Activated T-helper 1 cell treated with anti-CD3 and anti-CD28 coated beads, Interleukin-12 subunit alpha, Interleukin-12 subunit beta, Interleukin-2, Interleukin-4 antibody, amounts not matched to agents 30 ng/mL and 10 ng/mL and 1 ng/mL, durations not matched to agents 14 hours and 24 hours and 36 hours (primary cell): ENCODE measurements at regions of chr22 and their contacts with region 1.

Region 1: DNA sequence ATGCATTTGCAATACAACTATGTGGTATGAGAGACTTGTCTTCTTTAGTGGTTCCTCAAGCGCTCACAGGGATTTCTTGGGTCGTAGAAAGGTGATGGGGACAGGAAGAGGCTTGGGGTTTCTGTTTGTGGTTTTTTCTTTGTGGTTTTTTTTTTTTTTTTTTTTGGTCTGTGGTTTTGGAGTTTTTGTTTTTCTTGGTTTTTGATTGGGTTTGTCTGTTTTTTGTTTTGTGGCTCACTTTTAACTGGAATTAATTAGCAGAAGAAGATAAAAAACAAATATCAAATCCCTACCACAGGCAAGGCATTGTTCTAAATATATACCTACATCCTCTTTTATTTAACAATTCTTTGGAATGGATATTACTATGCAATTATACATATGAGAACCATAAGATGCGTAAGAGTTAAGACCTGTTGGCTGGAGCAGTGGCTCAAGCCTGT is 5.5 kb downstream of the TTC28 start:
- DNase-seq: peak; percentile 37
- H3K4me3 Mint-ChIP-seq: peak overlapping the region; percentile 73
- H3K27ac Mint-ChIP-seq: peak overlapping the region; percentile 99
- H3K4me1 Mint-ChIP-seq: peaks cover 30% of the 10 kb centered on the region
- H3K27me3 Mint-ChIP-seq: peaks cover 75% of the 10 kb centered on the region

Region 2: GRCh38 chr22:28443526-28443876 is 230.6 kb before region 1 on chr22:
- intact Hi-C with region 1: no loop called
- DNase-seq: peak; percentile 14
- H3K4me3 Mint-ChIP-seq: peak overlapping the region; percentile 86
- H3K27ac Mint-ChIP-seq: no peak overlapping the region
- H3K4me1 Mint-ChIP-seq: peaks cover 25% of the 10 kb centered on the region
- H3K27me3 Mint-ChIP-seq: peaks cover 8% of the 10 kb centered on the region

Region 3: DNA sequence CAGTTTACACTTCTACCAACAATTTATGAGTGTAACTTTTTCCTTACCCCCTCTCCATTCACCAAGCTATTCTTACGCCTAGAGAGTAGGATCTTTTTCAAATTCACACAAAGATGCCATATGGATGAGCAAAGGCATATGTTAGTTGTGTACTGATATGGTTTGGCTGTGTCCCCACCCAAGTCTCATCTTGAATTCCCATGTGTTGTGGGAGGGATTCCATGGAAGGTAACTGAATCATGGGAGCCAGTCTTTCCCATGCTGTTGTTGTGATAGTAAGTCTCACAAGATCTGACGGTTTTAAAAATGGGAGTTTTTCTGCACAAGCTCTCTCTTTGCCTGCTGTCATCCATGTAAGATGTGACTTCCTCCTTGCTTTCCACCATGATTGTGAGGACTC is 34.8 kb before region 1 on chr22:
- intact Hi-C with region 1: no loop called
- DNase-seq: no peak
- H3K4me3 Mint-ChIP-seq: no peak overlapping the region
- H3K27ac Mint-ChIP-seq: no peak overlapping the region
- H3K4me1 Mint-ChIP-seq: no peaks in the 10 kb centered on the region
- H3K27me3 Mint-ChIP-seq: peaks cover 49% of the 10 kb centered on the region

Region 4: GRCh38 chr22:28656181-28656580 is 18.0 kb before region 1 on chr22:
- intact Hi-C with region 1: loop called (anchors 2 kb)
- DNase-seq: no peak
- H3K4me3 Mint-ChIP-seq: no peak overlapping the region
- H3K27ac Mint-ChIP-seq: no peak overlapping the region
- H3K4me1 Mint-ChIP-seq: no peaks in the 10 kb centered on the region
- H3K27me3 Mint-ChIP-seq: peaks cover 71% of the 10 kb centered on the region

Region 5: DNA sequence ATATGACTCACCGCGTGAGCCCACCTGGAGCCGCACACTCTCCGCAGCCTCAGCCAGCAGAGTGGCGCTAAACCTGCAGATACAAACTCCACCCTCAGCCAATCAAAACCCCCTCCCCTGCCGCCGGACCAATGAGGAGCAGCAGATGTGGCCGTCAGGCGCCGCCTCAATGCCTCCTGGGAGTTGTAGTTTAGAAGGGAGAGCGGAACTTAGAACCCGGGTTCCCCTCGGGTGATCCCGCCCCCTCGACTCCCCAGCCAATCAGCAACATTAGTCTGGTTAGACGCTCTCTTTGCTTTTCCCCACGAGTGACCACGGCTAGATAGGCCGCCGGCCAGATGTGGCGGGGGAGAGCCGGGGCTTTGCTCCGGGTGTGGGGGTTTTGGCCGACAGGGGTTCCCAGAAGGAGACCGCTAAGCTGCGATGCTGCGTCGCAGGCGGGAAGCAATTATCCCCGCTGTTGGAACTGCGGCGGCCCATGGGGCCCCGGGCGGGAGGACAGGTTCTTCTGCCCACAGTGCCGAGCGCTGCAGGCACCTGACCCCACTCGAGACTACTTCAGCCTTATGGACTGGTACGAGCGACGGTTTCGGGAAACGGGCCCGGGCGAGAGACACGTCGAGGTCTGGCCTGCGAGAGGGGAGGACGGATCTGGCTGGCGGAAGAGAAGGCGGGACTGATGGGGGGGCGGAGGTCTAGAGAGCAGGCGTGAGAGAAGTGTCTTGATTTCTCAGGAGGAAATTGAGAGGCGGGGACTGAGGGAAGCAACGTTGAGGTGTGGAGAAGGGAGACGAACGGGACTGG is 67.8 kb after region 1 on chr22 and contains the starts of genes CHEK2 and HSCB:
- intact Hi-C with region 1: loop called (anchors 1 kb)
- DNase-seq: peak; percentile 97
- H3K4me3 Mint-ChIP-seq: peak within 1 kb of the TSS; percentile 86
- H3K27ac Mint-ChIP-seq: peak within 1 kb of the TSS; percentile 70
- H3K4me1 Mint-ChIP-seq: peaks cover 42% of the 10 kb centered on the region
- H3K27me3 Mint-ChIP-seq: no peaks in the 10 kb centered on the region
- total RNA-seq, gene CHEK2: 31.4 and 35.0 TPM in 2 replicates
- total RNA-seq, gene HSCB: 16.6 and 18.0 TPM in 2 replicates

Region 6: GRCh38 chr22:28810821-28811491 is 136.8 kb after region 1 on chr22:
- intact Hi-C with region 1: loop called (anchors 5 kb)
- DNase-seq: peak; percentile 60
- H3K4me3 Mint-ChIP-seq: peak overlapping the region; percentile 76
- H3K27ac Mint-ChIP-seq: peak overlapping the region; percentile 89
- H3K4me1 Mint-ChIP-seq: peaks cover 81% of the 10 kb centered on the region
- H3K27me3 Mint-ChIP-seq: no peaks in the 10 kb centered on the region

Region 7: GRCh38 chr22:28907311-28908008 is 233.3 kb after region 1 on chr22:
- intact Hi-C with region 1: loop called (anchors 5 kb)
- DNase-seq: peak; percentile 3
- H3K4me3 Mint-ChIP-seq: peak overlapping the region; percentile 4
- H3K27ac Mint-ChIP-seq: peak overlapping the region; percentile 55
- H3K4me1 Mint-ChIP-seq: peaks cover 24% of the 10 kb centered on the region
- H3K27me3 Mint-ChIP-seq: peaks cover 71% of the 10 kb centered on the region

Region 8: GRCh38 chr22:29167032-29167911 is 493.1 kb after region 1 on chr22:
- intact Hi-C with region 1: loop called (anchors 2 kb)
- DNase-seq: peak; percentile 59
- H3K4me3 Mint-ChIP-seq: peak overlapping the region; percentile 53
- H3K27ac Mint-ChIP-seq: peak overlapping the region; percentile 69
- H3K4me1 Mint-ChIP-seq: peaks cover 24% of the 10 kb centered on the region
- H3K27me3 Mint-ChIP-seq: peaks cover 38% of the 10 kb centered on the region